ENCODE measurements at regions of chr15 and their contacts with region 1.

Region 1: GRCh38 chr15:41557673-41558399 is 1.2 kb upstream of the TYRO3 start:
- DNase-seq: peak; percentile 87
- H3K4me3 Mint-ChIP-seq: peak overlapping the region; percentile 84
- H3K27ac Mint-ChIP-seq: peak overlapping the region; percentile 65
- H3K4me1 Mint-ChIP-seq: peaks cover 23% of the 10 kb centered on the region
- H3K27me3 Mint-ChIP-seq: peaks cover 45% of the 10 kb centered on the region

Region 2: GRCh38 chr15:41483115-41483514 is 74.7 kb before region 1 on chr15:
- intact Hi-C with region 1: no loop called
- DNase-seq: peak; percentile 87
- H3K4me3 Mint-ChIP-seq: peak overlapping the region; percentile 56
- H3K27ac Mint-ChIP-seq: peak overlapping the region; percentile 63
- H3K4me1 Mint-ChIP-seq: peaks cover 27% of the 10 kb centered on the region
- H3K27me3 Mint-ChIP-seq: peaks cover 2% of the 10 kb centered on the region

Region 3: DNA sequence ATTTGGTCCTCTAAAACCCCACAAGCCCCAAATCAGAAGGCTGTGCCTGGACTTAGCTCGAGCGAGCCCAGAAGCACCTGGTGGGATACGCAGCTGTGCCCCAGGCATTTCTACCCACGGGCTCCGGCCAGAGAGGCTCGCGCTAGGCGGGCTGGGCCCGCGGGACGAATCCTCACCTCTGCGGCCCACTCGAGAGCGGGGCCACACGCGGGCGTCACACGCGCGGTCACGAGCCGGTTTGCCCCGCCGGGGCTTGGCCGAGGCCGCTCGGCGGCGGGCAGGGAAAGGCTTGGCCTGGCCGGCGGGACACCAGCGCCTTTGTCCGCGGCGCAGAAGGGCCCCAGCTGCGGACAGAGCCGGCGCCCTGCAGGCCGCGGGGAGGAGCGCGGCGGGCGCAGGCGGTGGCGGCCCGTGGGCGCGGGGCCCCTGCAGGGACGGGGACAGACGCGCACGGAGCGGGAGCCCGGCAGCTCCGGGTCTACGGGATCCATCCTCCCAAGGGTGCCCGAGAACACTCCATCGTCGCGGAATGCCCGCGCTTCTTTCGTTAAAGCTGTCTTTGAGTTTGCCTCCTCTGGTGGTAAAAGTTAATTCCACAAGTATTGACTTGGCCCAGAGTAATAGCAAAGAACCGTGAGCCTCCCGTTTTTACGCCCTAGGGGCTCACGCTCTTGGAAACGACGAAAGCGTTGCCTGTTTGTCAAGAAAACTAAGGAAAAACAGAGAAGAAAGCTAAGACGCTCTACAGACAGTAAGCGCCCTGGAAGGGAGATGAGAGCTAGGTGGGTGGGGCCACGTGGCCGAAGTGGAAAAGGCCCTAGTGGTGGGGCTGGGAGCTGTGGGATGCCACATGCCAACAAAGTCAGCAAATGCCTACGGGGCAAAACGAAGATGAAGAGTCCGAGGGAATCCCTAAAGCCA is 27.6 kb after region 1 on chr15:
- intact Hi-C with region 1: loop called (anchors 2 kb)
- DNase-seq: peak; percentile 71
- H3K4me3 Mint-ChIP-seq: peak overlapping the region; percentile 70
- H3K27ac Mint-ChIP-seq: no peak overlapping the region
- H3K4me1 Mint-ChIP-seq: peaks cover 7% of the 10 kb centered on the region
- H3K27me3 Mint-ChIP-seq: peaks cover 53% of the 10 kb centered on the region

Region 4: GRCh38 chr15:42084460-42085235 is 526.8 kb after region 1 on chr15:
- intact Hi-C with region 1: no loop called
- DNase-seq: peak; percentile 84
- H3K4me3 Mint-ChIP-seq: no peak overlapping the region
- H3K27ac Mint-ChIP-seq: no peak overlapping the region
- H3K4me1 Mint-ChIP-seq: peaks cover 3% of the 10 kb centered on the region
- H3K27me3 Mint-ChIP-seq: peaks cover 14% of the 10 kb centered on the region

Measured in activated CD4-positive, alpha-beta T cell treated with anti-CD3 and anti-CD28 coated beads, Interleukin-2, amount 10 ng/mL, durations not matched to agents 24 days and 14 days (primary cell).